Common myeloid progenitor, CD34-positive (primary cell): ENCODE measurements at regions of chr19 and their contacts with region 1.

Region 1: GRCh38 chr19:18588611-18589379 is at the start of gene REX1BD:
- DNase-seq: peak; percentile 90 to 94 (median 92)
- H3K4me3 ChIP-seq: peak within 1 kb of the TSS; percentile 56 to 84 (median 71)
- H3K27ac ChIP-seq: peak within 1 kb of the TSS in 1 of 2 experiments; percentile 81
- H3K4me1 ChIP-seq: peaks cover 5 to 48% (median 30%) of the 10 kb centered on the region in 4 experiments
- H3K27me3 ChIP-seq: peaks cover 0 to 3% (median 0%) of the 10 kb centered on the region in 5 experiments

Region 2: DNA sequence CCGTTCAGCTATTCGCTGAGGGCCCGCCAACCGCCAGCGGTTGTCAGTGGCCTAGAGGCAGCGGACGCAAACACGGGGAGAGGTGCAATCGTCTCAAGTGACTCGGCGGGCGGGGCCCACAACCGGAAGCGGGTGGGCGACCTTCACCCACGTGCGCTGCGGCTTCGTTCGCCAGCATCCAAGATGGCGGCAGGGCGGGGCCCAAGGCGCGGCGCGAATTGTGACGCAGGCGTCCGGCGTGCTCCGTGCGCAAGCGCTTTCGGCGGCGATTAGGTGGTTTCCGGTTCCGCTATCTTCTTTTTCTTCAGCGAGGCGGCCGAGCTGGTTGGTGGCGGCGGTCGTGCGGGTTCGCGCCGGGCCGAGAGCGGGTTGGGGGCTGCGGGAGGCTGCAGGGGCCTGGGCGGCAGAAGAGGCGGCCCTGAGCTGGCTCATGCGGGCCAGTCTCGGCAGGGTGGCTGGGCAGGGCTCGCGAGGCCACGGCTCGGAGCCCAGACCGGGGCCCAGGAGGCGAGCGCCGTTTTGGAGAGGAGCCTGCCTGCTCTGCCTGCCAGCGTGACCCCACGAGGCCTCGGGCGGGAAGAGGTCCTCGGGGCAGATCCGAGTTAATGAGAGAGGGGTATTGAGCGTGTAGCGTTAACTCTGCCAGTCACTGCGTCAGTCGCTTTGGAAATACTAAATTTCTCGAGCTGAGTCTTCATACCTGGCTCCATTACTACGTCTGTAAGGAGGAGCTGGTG is 17.1 kb before region 1 on chr19 and contains the start of gene UBA52:
- CTCF ChIA-PET with region 1: interaction called, 43 read pairs
- POLR2A ChIA-PET with region 1: interaction called, 15 read pairs
- DNase-seq: peak; percentile 98 to 99 (median 99)
- H3K4me3 ChIP-seq: peak within 1 kb of the TSS; percentile 68 to 99 (median 95)
- H3K27ac ChIP-seq: peak within 1 kb of the TSS; percentile 79 to 96
- H3K4me1 ChIP-seq: peaks cover 7 to 22% (median 20%) of the 10 kb centered on the region in 4 experiments
- H3K27me3 ChIP-seq: no peaks in the 10 kb centered on the region

Region 3: DNA sequence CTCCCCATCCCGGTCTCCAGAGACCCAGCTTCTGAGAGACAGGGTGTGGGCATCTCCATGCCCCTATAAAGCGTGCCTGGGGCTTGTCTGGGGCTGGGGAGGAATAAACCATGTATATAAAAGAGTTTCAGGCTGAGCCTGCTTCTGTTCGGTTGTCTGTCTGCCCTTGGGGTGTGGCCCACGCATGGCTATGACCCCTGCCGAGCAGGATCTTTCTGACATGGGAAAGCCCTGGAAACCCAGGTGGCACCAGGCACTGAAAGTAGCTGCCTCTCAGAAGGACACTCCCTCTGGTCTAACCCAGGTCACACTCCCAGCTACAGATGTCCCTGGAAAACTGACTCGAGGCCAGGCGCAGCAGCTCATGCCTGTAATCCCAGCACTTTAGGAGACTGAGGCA is 32.1 kb after region 1 on chr19:
- CTCF ChIA-PET with region 1: no interaction called
- POLR2A ChIA-PET with region 1: no interaction called
- DNase-seq: no peak
- H3K4me3 ChIP-seq: no peak overlapping the region
- H3K27ac ChIP-seq: no peak overlapping the region
- H3K4me1 ChIP-seq: no peaks in the 10 kb centered on the region
- H3K27me3 ChIP-seq: peaks cover 0 to 22% (median 12%) of the 10 kb centered on the region in 5 experiments

Region 4: DNA sequence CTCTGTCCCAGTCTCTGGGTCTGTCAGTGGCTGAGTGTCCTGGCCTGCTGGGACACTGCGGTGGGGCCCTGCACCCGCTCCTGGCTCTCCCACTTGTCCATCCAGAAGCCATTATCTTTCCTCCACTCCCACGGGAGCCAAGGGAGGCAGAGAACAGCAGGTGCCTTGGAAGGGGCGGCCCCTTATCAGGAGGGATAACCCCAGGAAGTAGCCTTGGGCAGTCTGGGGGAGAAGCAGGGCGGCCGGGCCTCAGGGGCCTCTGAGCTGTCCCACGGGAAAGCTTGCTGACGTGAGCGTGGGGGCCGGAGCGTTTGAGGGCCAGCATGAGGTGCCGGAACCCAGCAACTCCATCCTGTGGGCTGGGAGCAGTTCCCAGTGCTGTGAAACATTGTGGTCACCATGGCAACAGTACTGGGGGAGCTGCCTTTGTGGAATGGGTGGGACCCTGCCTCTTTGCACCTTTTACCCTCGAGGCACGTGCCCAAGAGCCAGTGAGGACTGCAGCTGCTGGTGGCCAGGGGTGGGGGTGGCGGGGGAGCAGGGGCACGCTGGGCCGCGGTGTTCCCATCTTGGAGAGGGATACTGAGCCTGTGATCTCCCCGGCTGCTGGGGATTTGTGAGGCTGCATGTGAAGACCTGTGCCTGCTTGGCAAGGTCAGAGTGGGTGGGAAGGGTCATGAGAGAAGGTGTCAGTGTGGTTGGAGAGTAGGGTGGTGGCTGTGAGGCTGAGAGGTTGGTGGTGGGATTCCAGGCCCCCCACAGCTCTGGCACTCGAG is 69.0 kb after region 1 on chr19:
- CTCF ChIA-PET with region 1: no interaction called
- POLR2A ChIA-PET with region 1: no interaction called
- DNase-seq: no peak
- H3K4me3 ChIP-seq: no peak overlapping the region
- H3K27ac ChIP-seq: no peak overlapping the region
- H3K4me1 ChIP-seq: peaks cover 3 to 25% (median 12%) of the 10 kb centered on the region in 4 experiments
- H3K27me3 ChIP-seq: no peaks in the 10 kb centered on the region